ENCODE measurements at regions of chr14 and their contacts with region 1.

Region 1: GRCh38 chr14:61252369-61253063 is 28.6 kb downstream of the TMEM30B start:
- DNase-seq: peak; percentile 93
- H3K4me3 Mint-ChIP-seq: no peak overlapping the region
- H3K27ac Mint-ChIP-seq: no peak overlapping the region
- H3K4me1 Mint-ChIP-seq: peaks cover 8% of the 10 kb centered on the region
- H3K27me3 Mint-ChIP-seq: no peaks in the 10 kb centered on the region
- CTCF ChIP-seq: peak; percentile 85

Region 2: DNA sequence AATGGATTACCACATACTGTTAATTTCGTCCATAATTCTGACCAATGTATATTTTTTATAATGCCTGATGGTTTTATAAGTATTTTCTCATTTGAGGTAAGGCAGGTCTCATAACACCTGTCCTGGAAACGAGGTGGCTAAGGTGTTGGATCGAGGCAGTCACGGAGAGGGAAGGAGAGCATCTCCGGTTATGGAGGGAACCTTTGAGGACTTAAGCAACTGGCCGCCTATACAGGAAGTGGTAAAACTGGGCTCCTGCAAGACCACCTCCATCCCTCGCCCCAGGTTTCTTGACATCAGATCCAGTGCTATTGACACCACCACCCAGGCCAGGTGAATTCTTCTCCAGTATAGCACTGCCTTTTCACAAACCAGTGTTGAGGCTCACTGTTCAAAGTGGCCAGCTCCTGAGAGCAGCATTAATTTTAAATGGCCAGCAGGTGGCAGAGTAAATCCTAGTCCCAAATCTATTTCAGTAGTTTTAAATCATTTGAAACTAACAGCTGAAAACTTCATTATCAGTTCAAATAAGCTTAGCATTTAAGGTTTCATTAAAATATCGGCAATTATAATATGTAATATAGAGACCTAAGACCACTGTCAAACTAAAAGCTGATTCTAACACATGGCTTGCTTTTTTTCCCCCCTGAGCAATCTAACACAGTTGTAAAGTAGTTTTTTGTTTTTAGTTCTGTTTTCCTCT is 902.7 kb before region 1 on chr14:
- CTCF ChIA-PET with region 1: interaction called, 4 read pairs
- POLR2A ChIA-PET with region 1: no interaction called
- intact Hi-C with region 1: loop called (anchors 2 kb)
- DNase-seq: peak; percentile 65
- H3K4me3 Mint-ChIP-seq: no peak overlapping the region
- H3K27ac Mint-ChIP-seq: no peak overlapping the region
- H3K4me1 Mint-ChIP-seq: no peaks in the 10 kb centered on the region
- H3K27me3 Mint-ChIP-seq: no peaks in the 10 kb centered on the region
- CTCF ChIP-seq: peak; percentile 49

Region 3: DNA sequence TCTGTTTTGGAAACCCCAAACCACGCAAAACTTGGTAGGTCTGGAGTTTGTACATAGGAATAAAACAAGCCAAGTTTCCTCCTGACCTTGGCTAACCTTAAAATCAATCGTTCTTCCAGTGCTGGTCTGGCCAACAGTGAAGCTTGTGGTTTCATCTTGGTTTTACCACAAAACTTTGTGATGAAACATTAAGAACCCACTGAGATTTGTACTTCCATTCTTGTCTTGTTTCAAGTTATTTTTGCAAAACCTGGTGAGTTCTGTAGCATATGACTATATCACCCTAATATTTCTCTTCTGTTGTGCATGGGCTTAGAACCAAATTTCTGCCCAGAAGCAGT is 629.6 kb before region 1 on chr14:
- CTCF ChIA-PET with region 1: interaction called, 94 read pairs
- POLR2A ChIA-PET with region 1: interaction called, 5 read pairs
- intact Hi-C with region 1: loop called (anchors 1 kb)
- DNase-seq: peak; percentile 0
- H3K4me3 Mint-ChIP-seq: no peak overlapping the region
- H3K27ac Mint-ChIP-seq: no peak overlapping the region
- H3K4me1 Mint-ChIP-seq: no peaks in the 10 kb centered on the region
- H3K27me3 Mint-ChIP-seq: no peaks in the 10 kb centered on the region
- CTCF ChIP-seq: no peak

Region 4: GRCh38 chr14:60980811-60981632 is 271.5 kb before region 1 on chr14 and contains the starts of genes SLC38A6 and TRMT5:
- CTCF ChIA-PET with region 1: no interaction called
- POLR2A ChIA-PET with region 1: no interaction called
- intact Hi-C with region 1: loop called (anchors 2 kb)
- DNase-seq: peak; percentile 95
- H3K4me3 Mint-ChIP-seq: no peak within 1 kb of the TSS
- H3K27ac Mint-ChIP-seq: no peak within 1 kb of the TSS
- H3K4me1 Mint-ChIP-seq: peaks cover 16% of the 10 kb centered on the region
- H3K27me3 Mint-ChIP-seq: no peaks in the 10 kb centered on the region
- CTCF ChIP-seq: no peak
- total RNA-seq, gene SLC38A6: 7.9 and 12.6 TPM in 2 replicates
- total RNA-seq, gene TRMT5: 15.7 and 17.5 TPM in 2 replicates

Region 5: DNA sequence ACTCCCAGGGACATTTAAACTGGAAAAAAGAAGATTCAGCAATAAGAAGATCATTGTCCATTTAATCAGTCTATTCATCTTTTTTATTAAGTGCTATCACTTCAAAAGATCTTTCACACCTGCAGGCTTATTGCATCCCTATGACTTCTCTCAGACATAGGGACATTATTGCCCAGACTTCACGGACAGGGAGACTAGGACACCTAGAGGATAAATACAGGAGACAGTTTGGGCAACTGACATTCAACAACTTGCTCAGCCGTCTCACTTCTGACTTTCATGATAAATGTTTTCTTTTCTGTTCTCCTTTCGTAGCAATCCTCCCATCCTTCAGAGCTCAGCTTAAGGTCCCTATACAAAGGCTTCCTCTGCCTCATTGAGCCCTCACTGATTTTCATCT is 55.7 kb before region 1 on chr14:
- CTCF ChIA-PET with region 1: interaction called, 3 read pairs
- POLR2A ChIA-PET with region 1: no interaction called
- intact Hi-C with region 1: loop called (anchors 2 kb)
- DNase-seq: peak; percentile 59
- H3K4me3 Mint-ChIP-seq: no peak overlapping the region
- H3K27ac Mint-ChIP-seq: no peak overlapping the region
- H3K4me1 Mint-ChIP-seq: no peaks in the 10 kb centered on the region
- H3K27me3 Mint-ChIP-seq: no peaks in the 10 kb centered on the region
- CTCF ChIP-seq: peak; percentile 40

Region 6: GRCh38 chr14:61281186-61281947 is 28.9 kb after region 1 on chr14 and contains the start of gene TMEM30B:
- CTCF ChIA-PET with region 1: interaction called, 11 read pairs
- POLR2A ChIA-PET with region 1: no interaction called
- intact Hi-C with region 1: no loop called
- DNase-seq: no peak
- H3K4me3 Mint-ChIP-seq: peak within 1 kb of the TSS; percentile 45
- H3K27ac Mint-ChIP-seq: no peak within 1 kb of the TSS
- H3K4me1 Mint-ChIP-seq: no peaks in the 10 kb centered on the region
- H3K27me3 Mint-ChIP-seq: no peaks in the 10 kb centered on the region
- CTCF ChIP-seq: no peak
- total RNA-seq, gene TMEM30B: 0.09 and 0.22 TPM in 2 replicates